ENCODE measurements at regions of chr2 and their contacts with region 1.

Region 1: GRCh38 chr2:151437630-151438029 is 27.9 kb downstream of the RIF1 start:
- DNase-seq: peak; percentile 61
- ATAC-seq: peak; percentile 35
- H3K4me3 ChIP-seq: no peak overlapping the region
- H3K27ac ChIP-seq: no peak overlapping the region
- H3K4me1 ChIP-seq: no peaks in the 10 kb centered on the region
- H3K27me3 ChIP-seq: no peaks in the 10 kb centered on the region
- CTCF ChIP-seq: peak; percentile 58

Region 2: GRCh38 chr2:149587220-149587949 is 1850.2 kb before region 1 on chr2 and contains the start of gene MMADHC:
- CTCF ChIA-PET with region 1: no interaction called
- POLR2A ChIA-PET with region 1: no interaction called
- intact Hi-C with region 1: loop called (anchors 10 kb)
- DNase-seq: peak; percentile 97
- ATAC-seq: peak; percentile 97
- H3K4me3 ChIP-seq: peak within 1 kb of the TSS; percentile 88
- H3K27ac ChIP-seq: peak within 1 kb of the TSS; percentile 84
- H3K4me1 ChIP-seq: peaks cover 24% of the 10 kb centered on the region
- H3K27me3 ChIP-seq: no peaks in the 10 kb centered on the region
- CTCF ChIP-seq: no peak
- total RNA-seq, gene MMADHC: 99.1 and 130 TPM in 2 replicates

Region 3: GRCh38 chr2:151261231-151261976 is 176.2 kb before region 1 on chr2 and contains the start of gene RBM43:
- CTCF ChIA-PET with region 1: no interaction called
- POLR2A ChIA-PET with region 1: no interaction called
- intact Hi-C with region 1: loop called (anchors 5 kb)
- DNase-seq: peak; percentile 85
- ATAC-seq: peak; percentile 90
- H3K4me3 ChIP-seq: peak within 1 kb of the TSS; percentile 81
- H3K27ac ChIP-seq: peak within 1 kb of the TSS; percentile 75
- H3K4me1 ChIP-seq: peaks cover 14% of the 10 kb centered on the region
- H3K27me3 ChIP-seq: no peaks in the 10 kb centered on the region
- CTCF ChIP-seq: 0 out of 2 replicates have a peak, but pooled peaks have one; percentile 31
- total RNA-seq, gene RBM43: 2.5 and 2.6 TPM in 2 replicates

Region 4: DNA sequence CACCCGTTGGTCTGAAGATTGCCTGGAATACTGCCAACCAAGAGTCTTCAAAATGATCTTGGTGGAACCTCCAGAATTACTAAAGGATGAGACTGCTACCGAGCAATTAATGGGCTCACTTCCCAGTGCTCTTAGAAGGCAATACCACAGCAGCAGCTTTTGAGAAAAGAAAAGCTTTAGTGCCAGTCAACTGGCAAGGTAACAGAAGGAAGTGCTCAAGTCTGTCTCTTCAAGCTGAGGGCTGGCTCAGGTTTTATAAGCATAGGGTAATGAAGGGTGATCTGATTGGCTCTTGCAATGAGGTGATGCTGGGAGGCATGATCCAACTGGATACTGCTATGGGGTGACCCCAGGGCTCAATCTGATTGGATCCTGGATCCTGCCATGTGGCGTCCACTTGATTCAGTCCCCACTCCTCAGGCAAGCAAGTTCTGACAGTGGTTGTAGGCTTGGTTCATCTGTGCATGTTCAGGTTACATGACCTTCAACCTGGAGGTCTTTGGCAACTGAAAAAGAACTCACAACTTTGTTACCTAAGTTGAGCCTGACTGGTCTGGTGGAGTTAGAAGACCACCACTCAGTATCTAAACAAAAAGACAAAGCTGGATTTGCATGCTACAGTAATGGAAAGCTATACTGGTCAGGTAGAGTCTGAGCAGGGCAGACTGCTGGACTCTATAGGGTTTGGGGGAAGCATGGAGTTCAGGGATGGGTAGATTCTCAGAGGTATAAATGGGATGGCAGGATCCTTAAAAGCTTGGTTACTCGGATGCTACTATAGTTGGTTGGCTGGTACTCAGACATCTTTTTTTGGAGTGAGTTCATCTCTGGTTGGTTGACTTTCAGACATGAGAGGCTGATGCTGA is 41.9 kb before region 1 on chr2:
- CTCF ChIA-PET with region 1: no interaction called
- POLR2A ChIA-PET with region 1: no interaction called
- intact Hi-C with region 1: no loop called
- DNase-seq: no peak
- ATAC-seq: no peak
- H3K4me3 ChIP-seq: no peak overlapping the region
- H3K27ac ChIP-seq: no peak overlapping the region
- H3K4me1 ChIP-seq: peaks cover 10% of the 10 kb centered on the region
- H3K27me3 ChIP-seq: no peaks in the 10 kb centered on the region
- CTCF ChIP-seq: no peak

Region 5: DNA sequence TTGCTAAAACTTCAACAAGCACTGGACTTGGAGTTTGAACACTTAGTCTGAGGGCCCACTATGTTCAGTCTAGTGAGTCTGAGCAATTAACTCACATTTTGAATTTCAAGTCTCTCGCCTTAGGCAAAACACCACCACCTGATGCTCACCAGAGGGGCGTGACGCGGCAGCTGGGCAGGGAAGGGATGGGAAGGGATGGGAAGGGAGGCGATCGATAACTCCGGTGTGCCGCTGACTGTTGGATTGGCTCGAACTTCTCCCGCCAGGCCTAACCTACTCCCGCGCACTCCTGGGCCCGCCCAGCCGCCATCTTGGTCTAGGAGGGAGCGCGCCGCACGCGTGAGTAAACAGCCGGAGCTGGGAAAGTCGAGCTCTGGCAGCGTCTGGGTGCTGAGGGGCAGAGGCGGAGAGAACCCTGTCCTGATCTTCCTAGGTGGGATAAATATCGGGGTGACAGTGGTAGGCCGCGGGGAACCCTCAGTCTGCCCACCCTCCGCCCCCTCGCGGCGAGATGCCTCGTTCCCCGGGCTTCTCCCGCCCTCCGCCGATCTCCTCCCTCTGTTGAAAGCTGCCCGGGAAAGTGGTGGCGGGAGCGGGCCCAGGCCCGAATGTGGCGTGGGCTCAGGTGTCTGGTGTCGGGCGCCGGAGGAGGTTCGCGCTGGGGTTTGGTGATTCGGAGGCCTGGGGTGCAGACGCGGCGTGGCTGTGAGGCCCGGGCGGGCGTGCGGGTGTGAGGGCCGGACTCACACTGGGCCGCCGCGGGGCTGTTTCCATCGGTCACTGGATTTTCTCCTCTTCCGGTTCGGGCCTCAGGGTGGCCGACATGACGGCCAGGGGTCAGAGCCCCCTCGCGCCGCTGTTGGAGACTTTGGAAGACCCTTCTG is 27.8 kb before region 1 on chr2 and contains the start of gene RIF1:
- CTCF ChIA-PET with region 1: no interaction called
- POLR2A ChIA-PET with region 1: no interaction called
- intact Hi-C with region 1: no loop called
- DNase-seq: peak; percentile 96
- ATAC-seq: peak; percentile 97
- H3K4me3 ChIP-seq: peak within 1 kb of the TSS; percentile 100
- H3K27ac ChIP-seq: peak within 1 kb of the TSS; percentile 77
- H3K4me1 ChIP-seq: 0 out of 2 replicates have a peak, but pooled peaks cover 7% of the 10 kb centered on the region
- H3K27me3 ChIP-seq: no peaks in the 10 kb centered on the region
- CTCF ChIP-seq: peak; percentile 56
- total RNA-seq, gene RIF1: 33.6 and 37.1 TPM in 2 replicates

Region 6: DNA sequence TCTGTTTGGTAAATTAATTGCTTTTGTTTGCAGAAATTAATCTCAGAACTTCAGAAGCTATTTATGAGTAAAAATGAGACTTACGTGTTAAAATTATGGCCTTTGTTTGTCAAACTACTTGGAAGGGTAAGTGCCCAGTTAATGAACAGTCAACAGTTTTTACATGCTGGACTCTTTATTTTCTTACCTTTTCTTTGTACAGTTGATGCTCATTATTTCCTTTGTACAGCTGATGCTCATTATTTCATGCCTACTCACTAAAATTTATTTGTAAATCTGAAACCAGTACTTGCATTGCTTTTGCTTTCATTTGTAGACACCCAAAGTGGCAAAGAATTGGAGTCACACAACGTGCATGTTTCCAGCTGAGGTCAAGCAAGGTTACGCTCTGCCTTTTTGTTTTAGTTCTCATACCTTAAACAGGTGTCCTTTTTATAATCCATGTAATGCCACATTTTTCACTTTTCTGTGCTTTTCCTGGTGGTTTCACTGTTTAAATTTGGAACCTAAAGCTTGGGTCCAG is 14.7 kb before region 1 on chr2:
- CTCF ChIA-PET with region 1: no interaction called
- POLR2A ChIA-PET with region 1: interaction called, 11 read pairs
- intact Hi-C with region 1: no loop called
- DNase-seq: no peak
- ATAC-seq: no peak
- H3K4me3 ChIP-seq: no peak overlapping the region
- H3K27ac ChIP-seq: no peak overlapping the region
- H3K4me1 ChIP-seq: no peaks in the 10 kb centered on the region
- H3K27me3 ChIP-seq: no peaks in the 10 kb centered on the region
- CTCF ChIP-seq: no peak

Region 7: GRCh38 chr2:151491496-151491895 is 53.9 kb after region 1 on chr2:
- CTCF ChIA-PET with region 1: no interaction called
- POLR2A ChIA-PET with region 1: no interaction called
- intact Hi-C with region 1: no loop called
- DNase-seq: no peak
- ATAC-seq: no peak
- H3K4me3 ChIP-seq: no peak overlapping the region
- H3K27ac ChIP-seq: no peak overlapping the region
- H3K4me1 ChIP-seq: no peaks in the 10 kb centered on the region
- H3K27me3 ChIP-seq: no peaks in the 10 kb centered on the region
- CTCF ChIP-seq: no peak